Head of caudate nucleus (tissue), 42 donors: ENCODE measurements at regions of chr17 and their contacts with region 1.

Region 1: GRCh38 chr17:60630352-60630751 is 30.4 kb downstream of the PPM1D start:
- DNase-seq: peak in 14 of 42 donors; percentile 13 to 76 (median 37)

Region 2: GRCh38 chr17:60421273-60421934 is 208.9 kb before region 1 on chr17:
- intact Hi-C with region 1: loop called (anchors 10 kb)
- DNase-seq: peak; percentile 40 to 87 (median 74)

Region 3: GRCh38 chr17:60754057-60754604 is 123.8 kb after region 1 on chr17:
- intact Hi-C with region 1: no loop called
- DNase-seq: no peak

Region 4: GRCh38 chr17:60766778-60767190 is 136.4 kb after region 1 on chr17:
- intact Hi-C with region 1: no loop called
- DNase-seq: no peak